PC-3 (cell line): ENCODE measurements at regions of chr1 and their contacts with region 1.

Region 1: DNA sequence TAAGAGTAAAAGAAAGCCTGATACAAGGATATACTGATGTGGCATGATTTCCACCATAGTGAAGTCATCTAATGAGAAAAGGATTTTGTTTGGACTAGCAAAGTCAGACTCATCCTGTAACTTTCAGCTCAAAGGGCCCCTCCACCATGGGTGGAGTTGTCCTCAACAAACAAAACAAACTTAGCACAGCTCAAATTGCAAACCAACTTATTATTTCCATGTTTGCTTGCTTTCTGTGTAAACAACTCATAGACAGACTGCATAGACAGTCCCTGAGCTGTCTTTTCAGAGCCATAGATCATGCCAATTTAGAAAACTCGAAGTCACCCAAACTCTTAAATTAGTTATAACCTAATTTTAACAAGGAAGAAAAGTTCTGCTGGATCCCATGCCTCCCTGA is 69.4 kb upstream of the VAV3 start:
- DNase-seq: peak; percentile 73
- ATAC-seq: peak; percentile 99
- H3K4me3 ChIP-seq: no peak overlapping the region
- H3K27ac ChIP-seq: peak overlapping the region; percentile 36; the same call in 1 of the 2 replicates
- H3K4me1 ChIP-seq: peaks cover 14% of the 10 kb centered on the region
- H3K27me3 ChIP-seq: no peaks in the 10 kb centered on the region
- CTCF ChIP-seq: no peak

Region 2: GRCh38 chr1:107767156-107767582 is 267.2 kb before region 1 on chr1:
- CTCF ChIA-PET with region 1: no interaction called
- POLR2A ChIA-PET with region 1: no interaction called
- intact Hi-C with region 1: loop called (anchors 1 kb)
- DNase-seq: no peak
- ATAC-seq: peak; percentile 57
- H3K4me3 ChIP-seq: no peak overlapping the region
- H3K27ac ChIP-seq: no peak overlapping the region
- H3K4me1 ChIP-seq: peaks cover 12% of the 10 kb centered on the region; the same call in 1 of the 2 replicates
- H3K27me3 ChIP-seq: no peaks in the 10 kb centered on the region
- CTCF ChIP-seq: no peak